ENCODE measurements at regions of chr11 and their contacts with region 1.

Region 1: GRCh38 chr11:77187776-77188632 is 60.0 kb downstream of the MYO7A start:
- DNase-seq: peak; percentile 57 to 85
- H3K4me3 ChIP-seq: no peak overlapping the region
- H3K4me1 ChIP-seq: no peaks in the 10 kb centered on the region
- H3K27me3 ChIP-seq: peaks cover 2% of the 10 kb centered on the region; the same call in 1 of the 2 replicates

Region 2: GRCh38 chr11:77130763-77131513 is 57.1 kb before region 1 on chr11:
- in situ Hi-C with region 1: loop called (anchors 10 kb)
- DNase-seq: no peak
- H3K4me3 ChIP-seq: no peak overlapping the region
- H3K4me1 ChIP-seq: peaks cover 6% of the 10 kb centered on the region
- H3K27me3 ChIP-seq: no peaks in the 10 kb centered on the region

Region 3: DNA sequence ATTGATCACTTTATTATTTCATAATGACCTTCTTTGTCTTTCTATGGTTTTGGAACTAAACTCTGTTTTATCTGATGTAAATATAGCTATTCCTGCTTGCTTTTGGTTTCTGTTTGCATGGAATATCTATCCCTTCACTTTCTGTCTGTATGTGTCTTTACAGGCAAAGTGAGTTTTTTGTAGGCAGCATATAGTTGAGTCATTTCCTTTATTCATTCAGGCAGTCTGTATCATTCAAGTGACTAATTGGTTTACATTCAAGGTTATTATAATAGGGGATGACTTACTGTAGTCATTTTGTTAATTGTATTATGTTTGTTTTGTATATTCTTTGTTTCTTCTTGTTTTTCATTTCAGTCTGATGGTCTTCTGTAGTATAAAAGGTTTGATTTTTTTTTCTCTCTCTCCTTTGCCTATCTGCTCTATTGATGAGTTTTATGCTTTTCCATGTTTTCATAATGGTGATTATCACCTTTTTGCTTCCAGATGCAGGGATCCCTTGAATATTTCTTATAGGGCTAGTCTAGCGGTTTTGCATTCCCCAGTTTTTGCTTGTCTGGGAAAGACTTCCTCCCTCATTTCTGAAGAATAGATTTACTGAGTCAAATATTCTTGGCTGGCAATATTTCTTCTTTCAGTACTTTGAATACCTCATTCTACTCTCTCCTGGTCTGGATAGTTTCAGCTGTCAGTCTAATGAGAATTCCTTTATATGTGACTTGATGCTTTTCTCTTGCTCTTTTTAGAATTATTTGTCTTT is 63.1 kb after region 1 on chr11:
- in situ Hi-C with region 1: no loop called
- DNase-seq: no peak
- H3K4me3 ChIP-seq: no peak overlapping the region
- H3K4me1 ChIP-seq: no peaks in the 10 kb centered on the region
- H3K27me3 ChIP-seq: 0 out of 2 replicates have a peak, but pooled peaks cover 3% of the 10 kb centered on the region

Region 4: DNA sequence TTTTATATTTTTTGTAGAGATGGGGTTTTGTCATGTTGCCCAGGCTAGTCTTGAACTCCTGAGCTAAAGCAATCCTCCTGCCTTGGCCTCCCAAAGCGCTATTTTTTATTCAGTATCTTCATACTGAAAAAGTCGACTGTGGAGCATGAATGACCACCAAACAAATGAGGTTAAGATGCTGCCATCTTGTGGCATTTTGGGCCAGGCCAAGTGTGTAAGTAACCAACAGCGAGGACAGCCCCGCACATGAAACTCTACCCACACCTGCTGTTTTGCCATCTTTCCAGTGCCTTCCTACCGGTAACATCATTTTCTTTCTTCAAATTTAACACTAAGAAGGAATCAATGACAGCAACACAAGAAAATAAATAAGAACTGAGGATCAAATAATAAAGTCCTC is 369.6 kb after region 1 on chr11:
- in situ Hi-C with region 1: loop called (anchors 10 kb)
- DNase-seq: peak; percentile 19 to 41
- H3K4me3 ChIP-seq: no peak overlapping the region
- H3K4me1 ChIP-seq: no peaks in the 10 kb centered on the region
- H3K27me3 ChIP-seq: no peaks in the 10 kb centered on the region

Measured in HAP-1 (cell line).